B cell (primary cell): ENCODE measurements at regions of chr6 and their contacts with region 1.

Region 1: DNA sequence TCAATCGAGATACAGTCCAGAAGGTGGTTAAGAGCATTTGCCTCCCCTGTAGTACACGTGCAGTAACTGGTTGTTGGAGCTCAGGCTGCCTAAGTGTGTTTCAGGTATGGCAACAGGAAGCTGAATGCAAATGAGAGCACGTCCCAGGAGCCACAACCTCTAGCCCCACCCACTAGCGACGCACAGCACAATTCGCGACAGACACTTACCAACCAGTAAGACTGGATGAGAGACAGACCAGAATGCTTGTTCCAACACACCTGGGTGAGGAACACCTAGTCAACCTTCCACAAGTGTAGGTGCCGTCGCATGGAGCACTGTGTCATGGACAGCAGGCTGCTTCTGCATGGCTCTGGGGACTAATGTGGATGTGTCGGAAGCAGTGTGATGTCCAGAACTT is 7.2 kb upstream of the SERPINB1 start:
- DNase-seq: peak; percentile 80
- ATAC-seq: peak; percentile 69
- H3K4me3 ChIP-seq: no peak overlapping the region
- H3K4me3 Mint-ChIP-seq: peak overlapping the region; percentile 52
- H3K27ac ChIP-seq: peak overlapping the region; percentile 30 to 73
- H3K27ac Mint-ChIP-seq: peak overlapping the region; percentile 84
- H3K4me1 ChIP-seq: peaks cover 27 to 33% of the 10 kb centered on the region in 2 donors
- H3K4me1 Mint-ChIP-seq: peaks cover 43% of the 10 kb centered on the region
- H3K27me3 ChIP-seq: no peaks in the 10 kb centered on the region
- H3K27me3 Mint-ChIP-seq: no peaks in the 10 kb centered on the region
- CTCF ChIP-seq: no peak

Region 2: GRCh38 chr6:2862712-2863181 is 13.9 kb after region 1 on chr6:
- CTCF ChIA-PET with region 1: interaction called, 67 read pairs
- POLR2A ChIA-PET with region 1: interaction called, 12 read pairs
- intact Hi-C with region 1: loop called (anchors 1 kb)
- DNase-seq: peak; percentile 84
- ATAC-seq: peak; percentile 48
- H3K4me3 ChIP-seq: peak overlapping the region in 1 of 5 experiments; percentile 2
- H3K4me3 Mint-ChIP-seq: peak overlapping the region; percentile 72
- H3K27ac ChIP-seq: peak overlapping the region; percentile 91 to 97
- H3K27ac Mint-ChIP-seq: peak overlapping the region; percentile 95
- H3K4me1 ChIP-seq: peaks cover 71 to 75% of the 10 kb centered on the region in 2 donors
- H3K4me1 Mint-ChIP-seq: peaks cover 81% of the 10 kb centered on the region
- H3K27me3 ChIP-seq: no peaks in the 10 kb centered on the region
- H3K27me3 Mint-ChIP-seq: no peaks in the 10 kb centered on the region
- CTCF ChIP-seq: no peak

Region 3: DNA sequence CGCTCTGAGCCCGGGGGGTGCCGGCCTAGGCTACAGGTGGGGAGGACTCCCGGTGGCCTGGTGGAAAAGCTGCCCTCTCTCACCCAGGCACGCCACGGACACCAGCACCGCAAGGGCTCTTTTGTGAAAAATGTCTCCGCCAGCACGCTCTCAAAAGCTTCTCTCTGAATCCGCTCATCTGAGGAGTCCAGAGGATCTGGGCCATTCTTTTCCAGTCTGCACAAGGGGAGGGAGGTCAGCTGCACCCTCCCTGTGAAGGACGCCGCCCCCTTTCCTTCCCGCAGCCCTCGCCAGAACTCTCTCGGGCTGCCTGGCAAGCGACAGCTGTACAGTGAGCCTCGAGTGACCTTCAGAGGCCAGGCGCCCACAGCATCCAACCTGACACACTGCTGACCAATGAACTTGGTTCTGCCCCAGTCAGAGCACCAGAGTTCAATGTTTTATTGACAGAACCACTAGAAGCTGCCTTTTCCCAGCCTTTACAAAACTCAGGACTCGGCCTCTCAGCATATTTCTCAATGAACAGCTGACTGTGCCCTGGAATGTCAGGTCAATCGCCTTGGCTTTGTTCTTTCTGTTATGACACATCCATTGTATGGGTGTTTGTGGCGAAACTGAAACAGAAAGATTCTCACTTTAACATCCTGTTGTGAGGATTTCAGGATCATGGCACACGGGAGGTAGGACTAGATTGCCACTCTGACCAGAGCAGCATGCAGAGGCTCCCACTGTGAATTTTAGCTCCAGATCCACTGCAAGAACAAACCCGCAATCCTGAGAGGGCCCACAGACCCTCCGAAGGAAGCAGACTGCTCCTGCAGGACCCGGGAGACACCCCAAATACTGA is 27.6 kb after region 1 on chr6:
- CTCF ChIA-PET with region 1: interaction called, 12 read pairs
- POLR2A ChIA-PET with region 1: interaction called, 11 read pairs
- intact Hi-C with region 1: loop called (anchors 2 kb)
- DNase-seq: peak; percentile 58
- ATAC-seq: peak; percentile 15
- H3K4me3 ChIP-seq: peak overlapping the region; percentile 44 to 64 (median 58)
- H3K4me3 Mint-ChIP-seq: peak overlapping the region; percentile 91
- H3K27ac ChIP-seq: peak overlapping the region; percentile 91 to 94
- H3K27ac Mint-ChIP-seq: peak overlapping the region; percentile 97
- H3K4me1 ChIP-seq: peaks cover 73 to 75% of the 10 kb centered on the region in 2 donors
- H3K4me1 Mint-ChIP-seq: peaks cover 85% of the 10 kb centered on the region
- H3K27me3 ChIP-seq: no peaks in the 10 kb centered on the region
- H3K27me3 Mint-ChIP-seq: no peaks in the 10 kb centered on the region
- CTCF ChIP-seq: no peak

Region 4: GRCh38 chr6:2911171-2911570 is 62.3 kb after region 1 on chr6:
- CTCF ChIA-PET with region 1: interaction called, 165 read pairs
- POLR2A ChIA-PET with region 1: interaction called, 10 read pairs
- intact Hi-C with region 1: loop called (anchors 1 kb)
- DNase-seq: peak; percentile 78
- ATAC-seq: peak; percentile 83
- H3K4me3 ChIP-seq: no peak overlapping the region
- H3K4me3 Mint-ChIP-seq: peak overlapping the region; percentile 64
- H3K27ac ChIP-seq: peak overlapping the region; percentile 54 to 62
- H3K27ac Mint-ChIP-seq: peak overlapping the region; percentile 85
- H3K4me1 ChIP-seq: peaks cover 24 to 27% of the 10 kb centered on the region in 2 donors
- H3K4me1 Mint-ChIP-seq: peaks cover 36% of the 10 kb centered on the region
- H3K27me3 ChIP-seq: no peaks in the 10 kb centered on the region
- H3K27me3 Mint-ChIP-seq: no peaks in the 10 kb centered on the region
- CTCF ChIP-seq: no peak

Region 5: DNA sequence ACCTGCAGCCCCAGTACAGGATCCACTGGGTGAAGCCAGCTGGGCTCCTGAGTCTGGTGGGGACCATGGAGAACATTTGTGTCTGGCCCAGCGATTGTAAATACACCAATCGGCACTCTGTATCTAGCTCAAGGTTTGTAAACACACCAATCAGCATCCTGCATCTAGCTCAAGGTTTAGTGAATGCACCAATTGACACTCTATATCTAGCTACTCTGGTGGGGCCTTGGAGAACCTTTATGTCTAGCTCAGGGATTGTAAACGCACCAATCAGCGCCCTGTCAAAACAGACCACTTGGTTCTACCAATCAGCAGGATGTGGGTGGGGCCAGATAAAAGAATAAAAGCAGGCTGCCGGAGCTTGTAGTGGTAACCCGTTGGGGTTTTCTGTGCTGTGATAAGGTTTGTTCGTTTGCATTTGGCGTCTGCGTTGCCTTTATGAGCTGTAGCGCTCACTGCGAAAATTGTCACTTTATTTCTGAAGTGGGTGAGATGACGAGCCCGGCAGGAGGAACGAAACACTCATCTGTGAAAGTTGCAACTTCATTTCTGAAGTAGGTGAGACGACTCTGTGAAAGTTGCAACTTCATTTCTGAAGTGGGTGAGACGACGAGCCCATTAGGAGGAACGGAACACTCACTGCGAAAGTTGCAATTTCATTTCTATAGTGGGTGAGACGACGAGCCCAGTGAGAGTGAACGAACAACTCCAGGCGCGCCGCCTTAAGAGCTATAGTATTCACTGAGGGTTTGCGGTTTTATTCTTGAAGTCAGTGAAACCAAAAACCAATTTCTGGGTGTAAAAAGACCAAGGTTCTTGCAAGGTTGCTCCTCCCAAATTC is 91.4 kb after region 1 on chr6:
- CTCF ChIA-PET with region 1: interaction called, 383 read pairs
- POLR2A ChIA-PET with region 1: interaction called, 3 read pairs
- intact Hi-C with region 1: no loop called
- DNase-seq: peak; percentile 72
- ATAC-seq: peak; percentile 59
- H3K4me3 ChIP-seq: peak overlapping the region in 4 of 5 experiments; percentile 5 to 55 (median 42)
- H3K4me3 Mint-ChIP-seq: peak overlapping the region; percentile 86
- H3K27ac ChIP-seq: peak overlapping the region; percentile 31 to 68
- H3K27ac Mint-ChIP-seq: peak overlapping the region; percentile 93
- H3K4me1 ChIP-seq: peaks cover 45 to 62% of the 10 kb centered on the region in 2 donors
- H3K4me1 Mint-ChIP-seq: peaks cover 70% of the 10 kb centered on the region
- H3K27me3 ChIP-seq: no peaks in the 10 kb centered on the region
- H3K27me3 Mint-ChIP-seq: no peaks in the 10 kb centered on the region
- CTCF ChIP-seq: no peak